Left ventricle myocardium superior (tissue), 1 donor: ENCODE measurements at regions of chr12 and their contacts with region 1.

Region 1: DNA sequence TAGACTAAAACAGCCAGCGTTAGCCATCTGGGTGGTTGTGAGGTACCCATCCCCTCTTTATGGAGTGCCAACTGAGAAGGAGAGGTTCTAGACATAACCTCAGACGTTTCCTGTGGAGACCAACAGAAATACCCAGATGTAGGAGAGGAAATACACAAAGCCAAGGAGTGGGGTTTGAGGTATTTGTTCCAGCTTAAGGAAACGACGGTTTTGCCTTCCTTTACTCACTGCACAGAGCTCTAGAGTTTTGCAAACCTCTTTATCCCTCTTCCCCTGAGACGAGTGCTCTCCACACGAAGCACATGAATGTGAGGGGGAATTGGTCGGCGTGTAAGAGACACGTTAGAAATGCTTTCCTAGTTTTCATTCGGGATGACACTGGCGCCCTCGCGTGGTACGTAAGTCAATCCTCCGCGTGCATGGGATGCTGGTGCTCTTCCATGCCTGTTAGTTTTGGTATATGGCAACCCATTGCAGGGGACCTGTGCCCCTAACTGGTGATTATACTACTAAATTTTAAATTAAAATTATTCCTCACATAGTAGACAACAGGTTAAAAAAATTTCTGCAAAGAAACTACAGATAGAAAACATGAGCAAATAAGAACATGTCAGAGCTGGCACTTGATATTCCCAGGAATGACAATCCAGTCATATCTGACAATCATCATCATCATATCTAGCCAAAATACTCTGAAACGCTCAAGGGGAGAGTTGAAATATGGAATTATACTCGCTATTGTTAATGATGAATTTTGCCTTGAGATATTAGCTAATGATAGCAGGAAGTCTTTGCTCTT is 121.7 kb downstream of the PPM1H start:
- DNase-seq: peak; percentile 80
- ATAC-seq: peak; percentile 79

Region 2: DNA sequence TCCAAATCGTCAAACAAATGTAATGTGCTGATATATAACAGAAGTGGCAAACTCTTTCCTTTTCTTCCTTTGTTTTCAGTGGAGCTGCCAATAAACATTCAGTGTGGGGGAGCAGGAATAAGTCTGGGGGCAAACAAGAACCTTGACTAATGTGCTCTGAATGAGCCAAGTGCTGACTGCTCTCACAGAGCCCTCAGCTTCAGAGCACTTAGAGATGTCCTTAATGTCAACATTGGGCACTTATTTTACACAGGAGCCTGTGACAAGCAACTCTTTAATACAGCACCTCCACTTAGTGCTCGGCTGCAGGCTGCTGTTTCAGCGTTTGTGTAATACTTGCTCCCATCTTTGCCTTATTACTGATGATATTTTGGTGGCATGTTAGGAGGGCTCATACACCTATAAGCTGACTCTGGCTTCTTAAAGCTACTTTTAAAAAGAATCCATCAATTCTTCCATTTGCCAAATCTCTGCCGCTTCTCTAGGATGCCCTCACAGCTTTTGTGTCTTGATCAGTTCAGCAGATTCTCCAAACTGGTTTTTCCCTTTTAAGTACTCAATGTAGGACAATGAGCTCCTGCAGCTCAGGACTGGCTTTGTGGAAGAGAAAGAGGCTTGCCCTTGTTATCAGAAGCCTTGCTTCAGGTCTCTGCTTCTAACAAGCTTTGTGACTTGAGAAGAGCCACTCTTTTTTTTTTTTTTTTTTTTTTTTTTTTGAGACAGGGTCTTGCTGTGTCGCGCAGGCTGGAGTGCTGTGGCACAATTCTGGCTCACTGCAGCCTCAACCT is 140.0 kb before region 1 on chr12:
- intact Hi-C with region 1: no loop called
- DNase-seq: no peak
- ATAC-seq: no peak

Region 3: GRCh38 chr12:62934799-62935674 is 121.8 kb after region 1 on chr12 and contains the start of gene PPM1H:
- intact Hi-C with region 1: loop called (anchors 10 kb)
- DNase-seq: peak; percentile 83
- ATAC-seq: peak; percentile 91
- total RNA-seq, gene PPM1H: 8.5 TPM

Region 4: GRCh38 chr12:63021116-63021515 is 207.9 kb after region 1 on chr12:
- intact Hi-C with region 1: no loop called
- DNase-seq: no peak
- ATAC-seq: no peak